Activated CD8-positive, alpha-beta T cell treated with anti-CD3 and anti-CD28 coated beads, Interleukin-2, amount 10 ng/mL, durations not matched to agents 7 days and 5 days (primary cell): ENCODE measurements at regions of chr2 and their contacts with region 1.

Region 1: GRCh38 chr2:74334931-74335333 is 8.3 kb downstream of the SLC4A5 start:
- DNase-seq: peak; percentile 81
- ATAC-seq: peak; percentile 88
- H3K4me3 Mint-ChIP-seq: no peak overlapping the region
- H3K27ac Mint-ChIP-seq: no peak overlapping the region
- H3K4me1 Mint-ChIP-seq: peaks cover 4% of the 10 kb centered on the region
- H3K27me3 Mint-ChIP-seq: no peaks in the 10 kb centered on the region

Region 2: DNA sequence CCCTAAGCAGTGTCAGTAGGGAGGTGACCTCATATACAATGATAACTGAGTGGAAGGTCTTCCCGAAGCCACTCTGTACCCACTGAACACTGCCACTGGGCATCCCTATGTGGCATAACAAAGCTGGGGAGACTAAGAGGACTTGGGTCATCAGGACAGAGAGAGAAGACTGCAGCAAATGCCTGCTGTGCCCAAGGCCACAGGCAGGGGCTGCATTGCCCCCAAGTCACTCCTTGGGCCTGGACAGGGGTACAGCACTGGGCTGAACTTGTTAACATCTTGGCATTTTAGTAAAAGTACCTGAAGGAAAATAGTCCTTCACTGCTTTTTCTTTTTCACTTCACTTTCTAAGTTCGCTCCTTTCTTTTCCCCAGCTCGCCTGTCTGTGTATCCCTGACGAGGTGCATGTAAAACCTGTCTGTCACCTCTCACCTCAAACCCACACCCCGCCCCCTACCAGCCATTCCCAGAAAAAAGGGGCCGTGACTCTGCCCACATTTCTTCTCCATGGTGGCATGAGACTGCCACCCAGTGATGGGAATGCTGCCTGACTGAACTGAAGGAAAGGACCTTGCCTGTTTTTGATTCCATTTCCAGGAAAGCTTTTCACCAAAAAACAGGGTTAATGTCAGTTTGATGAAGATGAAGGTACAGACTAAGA is 73.6 kb before region 1 on chr2:
- CTCF ChIA-PET with region 1: interaction called, 110 read pairs
- POLR2A ChIA-PET with region 1: no interaction called
- DNase-seq: no peak
- ATAC-seq: no peak
- H3K4me3 Mint-ChIP-seq: no peak overlapping the region
- H3K27ac Mint-ChIP-seq: no peak overlapping the region
- H3K4me1 Mint-ChIP-seq: peaks cover 5% of the 10 kb centered on the region
- H3K27me3 Mint-ChIP-seq: no peaks in the 10 kb centered on the region

Region 3: DNA sequence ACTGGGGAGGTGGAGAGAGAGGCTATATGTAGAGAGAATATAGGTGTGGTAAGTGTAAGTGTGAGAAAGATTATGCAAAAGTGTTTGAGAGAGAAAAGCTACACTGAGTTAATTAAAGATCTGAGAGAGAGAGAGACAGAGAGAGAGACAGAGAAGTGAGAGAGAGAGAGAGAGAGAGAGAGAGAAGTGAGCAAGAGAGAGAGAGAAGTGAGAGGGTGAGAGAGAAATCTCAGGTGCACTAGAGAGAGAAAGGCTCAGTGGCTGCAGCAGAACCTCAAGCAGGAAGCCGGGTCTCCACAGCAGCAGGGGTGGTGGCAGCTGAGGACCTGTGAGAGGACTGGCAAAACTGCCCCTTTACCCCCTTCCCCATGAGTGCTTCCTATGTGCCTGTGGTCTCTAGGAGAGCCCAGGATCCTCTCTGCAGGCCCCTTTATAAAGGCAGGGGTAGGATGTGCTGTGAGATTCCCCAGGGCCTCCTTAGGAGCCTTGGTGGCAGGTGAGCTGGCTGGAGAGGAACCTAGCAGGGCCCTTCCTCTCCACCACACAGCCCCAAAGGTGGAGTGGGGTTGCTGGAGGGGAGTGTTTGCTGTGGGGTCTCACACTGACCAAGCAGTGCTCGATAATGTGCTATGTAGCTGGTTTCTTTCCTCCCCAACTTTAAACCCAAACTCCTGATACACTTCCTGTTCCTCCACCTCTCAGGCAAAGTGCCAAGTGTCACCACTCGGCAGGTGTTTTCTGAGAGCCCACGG is 44.3 kb before region 1 on chr2:
- CTCF ChIA-PET with region 1: interaction called, 20 read pairs
- POLR2A ChIA-PET with region 1: no interaction called
- DNase-seq: peak; percentile 72
- ATAC-seq: peak; percentile 85
- H3K4me3 Mint-ChIP-seq: peak overlapping the region; percentile 20
- H3K27ac Mint-ChIP-seq: peak overlapping the region; percentile 85
- H3K4me1 Mint-ChIP-seq: peaks cover 20% of the 10 kb centered on the region
- H3K27me3 Mint-ChIP-seq: no peaks in the 10 kb centered on the region

Region 4: DNA sequence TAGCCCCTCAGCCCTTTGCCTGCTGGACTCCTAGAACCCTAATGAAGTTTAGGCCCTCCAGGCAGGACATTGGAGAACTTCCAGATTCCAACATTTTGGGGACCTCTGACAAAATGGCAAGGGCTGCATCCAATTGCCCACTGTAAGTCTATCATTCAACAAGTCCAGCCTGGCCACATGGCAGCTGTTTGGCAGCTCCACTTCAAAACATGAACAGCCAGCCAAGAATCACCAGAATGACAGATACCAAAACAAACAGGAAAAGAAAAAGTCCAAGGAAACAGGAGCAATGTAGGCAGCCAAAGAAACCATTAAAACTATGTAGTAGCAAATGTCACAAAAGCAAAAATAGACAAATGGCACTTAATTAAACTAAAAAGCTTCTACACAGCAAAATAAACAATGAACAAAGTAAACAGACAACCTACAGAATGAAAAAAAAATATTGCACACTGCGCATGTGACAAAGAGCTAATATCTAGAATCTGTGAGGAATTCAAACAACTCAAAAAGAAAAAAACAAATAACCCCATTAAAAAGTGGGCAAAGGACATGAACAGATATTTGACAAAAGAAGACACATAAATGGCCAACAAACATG is 17.1 kb before region 1 on chr2:
- CTCF ChIA-PET with region 1: interaction called, 97 read pairs
- POLR2A ChIA-PET with region 1: no interaction called
- DNase-seq: no peak
- ATAC-seq: no peak
- H3K4me3 Mint-ChIP-seq: no peak overlapping the region
- H3K27ac Mint-ChIP-seq: no peak overlapping the region
- H3K4me1 Mint-ChIP-seq: no peaks in the 10 kb centered on the region
- H3K27me3 Mint-ChIP-seq: peaks cover 2% of the 10 kb centered on the region

Region 5: GRCh38 chr2:74357627-74358026 is 22.7 kb after region 1 on chr2:
- CTCF ChIA-PET with region 1: interaction called, 42 read pairs
- POLR2A ChIA-PET with region 1: interaction called, 3 read pairs
- DNase-seq: no peak
- ATAC-seq: no peak
- H3K4me3 Mint-ChIP-seq: no peak overlapping the region
- H3K27ac Mint-ChIP-seq: no peak overlapping the region
- H3K4me1 Mint-ChIP-seq: no peaks in the 10 kb centered on the region
- H3K27me3 Mint-ChIP-seq: no peaks in the 10 kb centered on the region

Region 6: DNA sequence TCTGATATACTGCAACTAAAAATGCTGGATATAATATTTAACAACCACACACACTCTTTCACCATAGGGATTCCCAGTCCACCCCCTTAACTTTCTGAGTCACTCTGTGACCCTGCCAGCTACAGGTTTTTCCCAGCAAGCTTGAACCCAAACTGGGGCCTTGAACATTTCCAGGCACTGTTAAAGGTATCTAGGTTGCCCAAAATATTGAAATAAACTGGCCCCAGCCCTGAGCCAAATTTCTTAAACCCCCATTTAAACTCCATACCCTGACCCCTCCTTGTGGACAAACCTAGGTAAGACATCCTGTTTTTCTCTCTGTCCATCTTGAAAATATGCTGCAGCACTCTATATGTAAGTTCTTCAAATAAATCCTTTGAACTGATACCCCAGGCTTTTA is 64.9 kb after region 1 on chr2:
- CTCF ChIA-PET with region 1: interaction called, 17 read pairs
- POLR2A ChIA-PET with region 1: no interaction called
- DNase-seq: peak; percentile 51
- ATAC-seq: peak; percentile 80
- H3K4me3 Mint-ChIP-seq: no peak overlapping the region
- H3K27ac Mint-ChIP-seq: no peak overlapping the region
- H3K4me1 Mint-ChIP-seq: peaks cover 5% of the 10 kb centered on the region
- H3K27me3 Mint-ChIP-seq: peaks cover 9% of the 10 kb centered on the region